Activated CD8-positive, alpha-beta T cell treated with anti-CD3 and anti-CD28 coated beads, Interleukin-2, amount 10 ng/mL, durations not matched to agents 7 days and 5 days (primary cell): ENCODE measurements at regions of chr7 and their contacts with region 1.

Region 1: GRCh38 chr7:142796608-142797385 is 26.0 kb downstream of the PRSS2 start:
- DNase-seq: peak; percentile 35
- ATAC-seq: peak; percentile 11
- H3K4me3 Mint-ChIP-seq: peak overlapping the region; percentile 90
- H3K27ac Mint-ChIP-seq: peak overlapping the region; percentile 99
- H3K4me1 Mint-ChIP-seq: peaks cover 70% of the 10 kb centered on the region
- H3K27me3 Mint-ChIP-seq: no peaks in the 10 kb centered on the region

Region 2: GRCh38 chr7:142438235-142438922 is 358.4 kb before region 1 on chr7:
- CTCF ChIA-PET with region 1: no interaction called
- POLR2A ChIA-PET with region 1: interaction called, 13 read pairs
- DNase-seq: peak; percentile 51
- ATAC-seq: no peak
- H3K4me3 Mint-ChIP-seq: no peak overlapping the region
- H3K27ac Mint-ChIP-seq: no peak overlapping the region
- H3K4me1 Mint-ChIP-seq: peaks cover 56% of the 10 kb centered on the region
- H3K27me3 Mint-ChIP-seq: no peaks in the 10 kb centered on the region

Region 3: DNA sequence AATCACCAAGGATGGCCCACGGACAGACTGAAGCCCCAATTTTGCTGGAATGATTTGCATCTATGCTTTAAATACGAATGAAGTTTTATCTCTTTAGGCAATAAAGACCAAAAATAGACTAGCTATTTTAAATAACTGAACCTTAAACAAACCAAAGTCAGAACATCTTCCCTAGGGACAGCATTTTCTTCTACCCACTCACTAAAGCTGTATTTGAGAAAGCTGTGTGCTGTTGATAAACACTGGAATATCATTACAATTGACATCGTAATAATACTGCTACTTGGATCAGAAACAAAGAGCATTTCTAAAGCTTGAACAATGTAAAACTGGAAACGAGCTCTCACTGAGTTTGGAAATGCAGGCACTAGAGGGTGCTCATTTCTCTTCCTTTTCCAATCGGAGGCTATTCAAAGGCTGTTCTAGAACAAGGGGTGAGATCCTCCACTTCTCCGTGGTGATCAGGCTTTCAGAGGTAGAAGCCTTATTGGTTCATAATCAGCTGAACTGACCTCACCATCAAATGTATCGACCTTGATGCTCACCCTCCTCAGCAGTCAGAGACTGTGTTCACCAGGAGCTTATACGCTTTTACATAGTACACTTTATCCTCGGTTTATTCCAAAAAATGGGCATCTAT is 272.9 kb before region 1 on chr7:
- CTCF ChIA-PET with region 1: no interaction called
- POLR2A ChIA-PET with region 1: interaction called, 21 read pairs
- DNase-seq: no peak
- ATAC-seq: no peak
- H3K4me3 Mint-ChIP-seq: no peak overlapping the region
- H3K27ac Mint-ChIP-seq: no peak overlapping the region
- H3K4me1 Mint-ChIP-seq: peaks cover 9% of the 10 kb centered on the region
- H3K27me3 Mint-ChIP-seq: peaks cover 3% of the 10 kb centered on the region

Region 4: DNA sequence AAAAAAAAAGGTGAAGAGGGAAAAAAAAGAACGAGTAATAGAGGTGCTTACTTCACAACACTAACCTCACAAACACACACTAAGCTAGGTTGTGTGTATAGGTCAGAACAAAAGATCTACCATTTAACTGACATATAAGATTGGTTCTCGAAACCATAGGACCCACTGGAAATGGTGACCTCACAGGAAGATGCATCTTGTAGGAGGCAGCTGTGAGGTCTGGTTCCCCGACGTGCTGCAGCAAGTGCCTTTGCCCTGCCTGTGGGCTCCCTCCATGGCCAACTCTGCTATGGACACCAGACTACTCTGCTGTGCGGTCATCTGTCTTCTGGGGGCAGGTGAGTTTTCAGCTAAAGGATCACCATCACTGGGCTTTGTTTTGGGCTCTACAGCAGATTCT is 181.3 kb before region 1 on chr7:
- CTCF ChIA-PET with region 1: interaction called, 5 read pairs
- POLR2A ChIA-PET with region 1: interaction called, 14 read pairs
- DNase-seq: no peak
- ATAC-seq: peak; percentile 45
- H3K4me3 Mint-ChIP-seq: peak overlapping the region; percentile 57
- H3K27ac Mint-ChIP-seq: peak overlapping the region; percentile 72
- H3K4me1 Mint-ChIP-seq: peaks cover 7% of the 10 kb centered on the region
- H3K27me3 Mint-ChIP-seq: peaks cover 15% of the 10 kb centered on the region

Region 5: DNA sequence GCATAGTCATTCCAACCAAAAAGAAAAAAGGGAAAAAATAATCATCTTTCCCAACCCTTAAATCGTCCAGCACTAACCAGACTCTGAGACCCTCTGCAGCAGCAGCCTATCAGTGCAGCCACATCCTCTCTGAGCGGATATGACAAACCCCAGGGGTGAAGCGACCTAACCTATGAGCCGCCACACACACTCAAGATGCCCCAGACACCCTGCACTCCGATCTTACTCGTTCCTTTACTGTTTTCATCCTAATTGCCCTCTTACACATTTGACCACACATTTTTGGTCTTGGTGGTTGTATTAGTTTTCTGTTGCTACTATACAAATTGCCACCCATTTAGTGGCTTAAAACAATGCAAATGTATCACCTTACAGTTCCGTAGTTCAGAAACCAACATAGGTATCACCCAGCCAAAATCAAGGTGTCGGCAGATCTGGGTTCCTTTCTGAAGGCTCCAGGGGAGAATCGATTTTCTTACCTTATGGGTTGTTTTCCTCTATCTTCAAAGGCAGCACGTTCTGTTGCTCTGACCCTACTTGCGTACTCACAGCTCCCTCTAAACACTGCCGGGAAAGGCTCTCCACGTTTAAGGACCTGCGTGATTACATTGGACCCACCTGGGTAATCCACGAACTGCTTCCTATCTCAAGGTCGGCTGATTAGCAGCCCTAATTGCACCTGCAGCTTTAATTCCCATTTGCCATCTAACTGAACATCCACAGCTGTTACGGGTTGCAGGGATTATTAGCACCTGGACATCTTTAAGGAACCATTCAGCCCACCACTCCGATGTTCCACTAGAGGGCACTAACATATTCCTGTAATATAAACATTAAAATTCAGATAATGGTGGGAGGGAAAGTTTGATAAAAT is 84.8 kb before region 1 on chr7:
- CTCF ChIA-PET with region 1: no interaction called
- POLR2A ChIA-PET with region 1: interaction called, 34 read pairs
- DNase-seq: peak; percentile 70
- ATAC-seq: peak; percentile 83
- H3K4me3 Mint-ChIP-seq: peak overlapping the region; percentile 74
- H3K27ac Mint-ChIP-seq: peak overlapping the region; percentile 95
- H3K4me1 Mint-ChIP-seq: peaks cover 84% of the 10 kb centered on the region
- H3K27me3 Mint-ChIP-seq: no peaks in the 10 kb centered on the region